ENCODE measurements at regions of chr1 and their contacts with region 1.

Region 1: DNA sequence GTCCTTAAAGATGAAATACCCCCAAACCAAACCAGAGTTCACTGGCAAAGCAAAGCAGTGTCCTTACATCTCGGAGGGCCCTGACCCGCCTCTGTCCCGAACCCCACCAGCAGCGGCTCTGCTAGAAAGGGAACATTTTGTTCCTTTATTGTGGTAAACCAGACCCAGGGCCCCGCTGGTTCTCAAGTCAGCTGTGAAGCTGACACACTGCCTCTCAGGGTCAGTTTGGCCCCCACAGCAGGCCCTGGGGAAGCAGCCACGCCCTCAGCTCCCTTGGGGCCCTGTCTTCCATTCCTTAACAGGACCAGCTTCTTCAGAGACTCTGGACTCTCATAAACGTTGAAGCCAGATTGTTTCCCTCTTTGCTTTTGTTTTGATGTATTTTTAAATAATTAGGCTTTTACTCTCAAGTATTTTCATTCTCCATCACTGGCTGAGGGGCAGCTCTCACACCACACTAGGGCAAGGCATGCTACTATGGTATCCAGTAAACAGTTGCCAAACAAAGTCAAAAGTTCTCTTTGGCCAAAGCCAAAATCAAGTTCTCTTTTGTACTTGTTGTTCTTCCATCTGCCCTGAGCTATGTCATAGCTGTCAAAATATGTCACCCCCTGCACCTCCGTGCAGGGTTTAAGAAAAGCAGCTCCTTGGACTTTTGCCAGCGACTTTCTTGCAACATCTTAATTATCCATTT is 61.1 kb upstream of the ANGPTL1 start:
- DNase-seq: peak; percentile 91 to 92
- H3K4me3 ChIP-seq: no peak overlapping the region
- CTCF ChIP-seq: no peak
- POLR2A ChIP-seq: no peak

Region 2: DNA sequence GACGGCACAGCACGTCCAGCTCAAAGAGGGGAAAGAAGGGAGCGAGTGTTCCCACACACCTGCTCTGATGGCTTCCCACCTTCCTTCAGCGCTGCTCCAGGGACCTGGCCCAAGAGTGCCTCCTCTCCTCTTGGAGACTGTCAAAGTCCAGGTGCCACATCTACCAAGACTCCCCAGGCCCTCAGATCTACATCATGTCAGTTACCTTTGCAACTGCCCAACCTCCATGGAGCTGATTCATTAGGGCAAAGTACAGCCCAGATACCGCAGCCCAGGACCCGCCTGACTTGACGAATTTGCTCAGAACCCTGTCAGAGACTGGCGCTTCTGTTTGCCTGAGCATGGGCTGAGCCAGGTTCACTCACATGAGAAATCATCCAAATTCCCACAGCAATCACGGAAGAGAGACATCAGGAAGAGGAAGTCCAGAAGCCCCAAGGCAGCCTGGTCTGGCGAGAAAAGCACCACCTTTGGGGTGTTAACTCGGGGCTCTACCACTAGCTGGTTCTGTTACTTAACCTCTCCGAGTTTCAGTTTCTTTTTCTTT is 962.1 kb before region 1 on chr1 and contains the start of gene SEC16B:
- intact Hi-C with region 1: no loop called
- DNase-seq: no peak
- H3K4me3 ChIP-seq: no peak within 1 kb of the TSS
- CTCF ChIP-seq: no peak
- POLR2A ChIP-seq: no peak
- total RNA-seq, gene SEC16B: 0.21 to 1.8 (median 1.4) TPM

Region 3: GRCh38 chr1:178282949-178283367 is 649.0 kb before region 1 on chr1:
- intact Hi-C with region 1: loop called (anchors 10 kb)
- DNase-seq: no peak
- H3K4me3 ChIP-seq: no peak overlapping the region
- CTCF ChIP-seq: no peak
- POLR2A ChIP-seq: no peak

Region 4: DNA sequence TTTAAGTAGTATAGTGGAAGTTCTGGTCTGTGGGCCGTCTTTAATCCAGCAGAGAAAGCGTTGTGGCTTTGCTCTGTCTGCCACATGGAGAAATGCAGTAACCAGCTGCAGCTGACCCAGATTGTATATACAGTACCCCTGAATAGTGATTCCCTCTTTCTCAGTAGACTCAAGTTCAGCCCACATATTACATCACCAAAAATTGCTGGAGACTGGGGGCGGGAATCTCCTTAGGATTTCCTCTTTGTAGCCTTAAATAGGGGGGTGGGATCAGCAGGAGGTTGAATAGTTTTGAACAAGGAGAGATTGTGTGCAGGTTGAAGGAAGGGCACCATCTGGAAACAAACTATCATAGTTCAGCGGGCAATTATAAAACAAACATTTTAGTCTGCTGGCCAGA is 61.1 kb before region 1 on chr1 and contains the start of gene ANGPTL1:
- intact Hi-C with region 1: loop called (anchors 2 kb)
- DNase-seq: no peak
- H3K4me3 ChIP-seq: no peak within 1 kb of the TSS
- CTCF ChIP-seq: no peak
- POLR2A ChIP-seq: no peak
- total RNA-seq, gene ANGPTL1: 3.4 to 28.3 (median 17.9) TPM

Region 5: DNA sequence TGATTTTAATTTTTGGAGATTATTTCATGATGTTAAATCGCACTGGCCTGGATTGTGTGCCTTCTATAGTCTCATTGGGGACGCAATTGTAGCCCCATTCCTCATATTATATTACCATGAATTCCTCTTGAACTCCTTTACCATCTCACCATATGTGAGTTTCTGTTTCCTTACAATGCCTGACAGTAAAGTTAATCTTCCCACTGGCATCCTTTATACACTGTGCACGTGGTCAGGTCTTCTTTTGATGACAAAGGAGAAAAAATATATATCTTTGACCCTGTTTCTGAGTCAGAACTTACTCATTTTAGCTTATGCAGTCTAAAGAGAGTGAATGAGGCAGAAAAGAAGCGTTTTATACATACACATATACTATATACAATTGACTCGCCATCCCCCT is 298.2 kb after region 1 on chr1:
- intact Hi-C with region 1: no loop called
- DNase-seq: no peak
- H3K4me3 ChIP-seq: no peak overlapping the region
- CTCF ChIP-seq: no peak
- POLR2A ChIP-seq: no peak

Measured in lower leg skin (tissue), 4 donors.